ENCODE measurements at regions of chr2 and their contacts with region 1.

Region 1: GRCh38 chr2:205903638-205904037 is 182.3 kb downstream of the INO80D start:
- DNase-seq: peak; percentile 56
- ATAC-seq: peak; percentile 94
- H3K4me3 ChIP-seq: no peak overlapping the region
- H3K27ac ChIP-seq: no peak overlapping the region
- H3K4me1 ChIP-seq: 0 out of 2 replicates have a peak, but pooled peaks cover 5% of the 10 kb centered on the region
- H3K27me3 ChIP-seq: peaks cover 12% of the 10 kb centered on the region; the same call in 1 of the 2 replicates
- CTCF ChIP-seq: peak; percentile 64

Region 2: GRCh38 chr2:205785507-205786260 is 118.0 kb before region 1 on chr2:
- CTCF ChIA-PET with region 1: no interaction called
- POLR2A ChIA-PET with region 1: no interaction called
- intact Hi-C with region 1: no loop called
- DNase-seq: no peak
- ATAC-seq: no peak
- H3K4me3 ChIP-seq: no peak overlapping the region
- H3K27ac ChIP-seq: no peak overlapping the region
- H3K4me1 ChIP-seq: no peaks in the 10 kb centered on the region
- H3K27me3 ChIP-seq: no peaks in the 10 kb centered on the region
- CTCF ChIP-seq: no peak

Region 3: GRCh38 chr2:205885492-205886099 is 18.0 kb before region 1 on chr2:
- CTCF ChIA-PET with region 1: no interaction called
- POLR2A ChIA-PET with region 1: no interaction called
- intact Hi-C with region 1: no loop called
- DNase-seq: peak; percentile 89
- ATAC-seq: peak; percentile 91
- H3K4me3 ChIP-seq: no peak overlapping the region
- H3K27ac ChIP-seq: no peak overlapping the region
- H3K4me1 ChIP-seq: peaks cover 4% of the 10 kb centered on the region
- H3K27me3 ChIP-seq: 0 out of 2 replicates have a peak, but pooled peaks cover 3% of the 10 kb centered on the region
- CTCF ChIP-seq: peak; percentile 90

Region 4: GRCh38 chr2:205925373-205926337 is 22.0 kb after region 1 on chr2:
- CTCF ChIA-PET with region 1: interaction called, 7 read pairs
- POLR2A ChIA-PET with region 1: no interaction called
- intact Hi-C with region 1: loop called (anchors 2 kb)
- DNase-seq: peak; percentile 75
- ATAC-seq: peak; percentile 97
- H3K4me3 ChIP-seq: peak overlapping the region; percentile 60
- H3K27ac ChIP-seq: no peak overlapping the region
- H3K4me1 ChIP-seq: 0 out of 2 replicates have a peak, but pooled peaks cover 4% of the 10 kb centered on the region
- H3K27me3 ChIP-seq: peaks cover 77% of the 10 kb centered on the region
- CTCF ChIP-seq: peak; percentile 97

Region 5: GRCh38 chr2:205947621-205948495 is 44.2 kb after region 1 on chr2:
- CTCF ChIA-PET with region 1: interaction called, 4 read pairs
- POLR2A ChIA-PET with region 1: no interaction called
- intact Hi-C with region 1: loop called (anchors 2 kb)
- DNase-seq: peak; percentile 70
- ATAC-seq: peak; percentile 73
- H3K4me3 ChIP-seq: 0 out of 2 replicates have a peak overlapping the region, but pooled peaks have one; percentile 3
- H3K27ac ChIP-seq: no peak overlapping the region
- H3K4me1 ChIP-seq: no peaks in the 10 kb centered on the region
- H3K27me3 ChIP-seq: no peaks in the 10 kb centered on the region
- CTCF ChIP-seq: peak; percentile 96

Region 6: DNA sequence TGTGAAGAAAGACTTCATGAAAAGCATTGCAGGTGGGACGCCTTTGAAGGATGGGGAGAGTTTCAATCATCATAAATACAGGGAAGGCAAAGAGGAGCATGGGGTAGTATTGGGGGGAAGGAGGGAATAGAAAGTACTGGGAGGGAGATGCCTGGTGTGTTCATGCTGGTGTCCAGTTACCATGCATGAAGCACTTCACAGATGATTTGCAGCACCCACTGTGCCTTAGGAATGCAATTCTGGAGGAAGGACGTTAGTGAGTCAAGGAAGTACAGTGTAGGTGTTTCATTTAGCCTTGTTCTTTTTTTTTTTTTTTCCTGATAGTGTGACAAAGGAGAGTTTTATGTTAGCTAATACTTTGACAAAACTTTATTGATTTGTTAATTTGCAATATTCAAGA is 576.5 kb after region 1 on chr2:
- CTCF ChIA-PET with region 1: no interaction called
- POLR2A ChIA-PET with region 1: interaction called, 12 read pairs
- intact Hi-C with region 1: no loop called
- DNase-seq: no peak
- ATAC-seq: no peak
- H3K4me3 ChIP-seq: no peak overlapping the region
- H3K27ac ChIP-seq: no peak overlapping the region
- H3K4me1 ChIP-seq: no peaks in the 10 kb centered on the region
- H3K27me3 ChIP-seq: peaks cover 50% of the 10 kb centered on the region
- CTCF ChIP-seq: no peak

Measured in PC-3 (cell line).